Right lobe of liver (tissue), 6 donors: ENCODE measurements at regions of chr14 and their contacts with region 1.

Region 1: GRCh38 chr14:70707138-70708038 is 65.7 kb downstream of the TTC9 start:
- DNase-seq: peak in 1 of 3 donors; percentile 55
- ATAC-seq: peak in 2 of 4 donors; percentile 38 to 90
- H3K4me3 ChIP-seq: no peak overlapping the region
- H3K27ac ChIP-seq: no peak overlapping the region
- H3K4me1 ChIP-seq: no peaks in the 10 kb centered on the region
- H3K27me3 ChIP-seq: no peaks in the 10 kb centered on the region
- CTCF ChIP-seq: no peak
- POLR2A ChIP-seq: no peak

Region 2: DNA sequence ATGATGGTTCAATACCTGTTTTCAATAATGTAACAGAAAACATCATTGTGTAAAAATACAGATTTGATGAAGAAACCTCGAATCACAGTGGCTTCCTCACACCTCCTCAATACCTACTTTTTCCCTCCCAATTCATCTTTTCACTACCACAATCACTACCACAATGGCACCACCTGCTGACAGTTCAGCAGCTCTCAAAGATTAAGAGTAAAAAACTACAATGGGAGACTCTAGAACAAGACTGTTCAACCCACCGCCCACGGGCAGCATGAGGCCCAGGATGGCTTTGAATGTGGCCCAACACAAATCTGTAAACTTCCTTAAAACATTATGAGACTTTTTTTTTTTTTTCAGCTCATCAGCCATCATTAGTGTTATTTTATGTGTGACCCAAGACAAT is 122.2 kb before region 1 on chr14:
- intact Hi-C with region 1: no loop called
- DNase-seq: no peak
- ATAC-seq: no peak
- H3K4me3 ChIP-seq: no peak overlapping the region
- H3K27ac ChIP-seq: no peak overlapping the region
- H3K4me1 ChIP-seq: no peaks in the 10 kb centered on the region
- H3K27me3 ChIP-seq: no peaks in the 10 kb centered on the region
- CTCF ChIP-seq: peak in 1 of 4 donors; percentile 12
- POLR2A ChIP-seq: no peak

Region 3: GRCh38 chr14:70635971-70636595 is 71.3 kb before region 1 on chr14:
- intact Hi-C with region 1: loop called in 1 of 2 experiments (anchors 10 kb)
- DNase-seq: no peak
- ATAC-seq: peak in 1 of 4 donors; percentile 7
- H3K4me3 ChIP-seq: no peak overlapping the region
- H3K27ac ChIP-seq: no peak overlapping the region
- H3K4me1 ChIP-seq: peaks cover 0 to 4% (median 0%) of the 10 kb centered on the region in 4 donors
- H3K27me3 ChIP-seq: no peaks in the 10 kb centered on the region
- CTCF ChIP-seq: no peak
- POLR2A ChIP-seq: no peak